Sciatic nerve (tissue), 2 donors: ENCODE measurements at regions of chr7 and their contacts with region 1.

Region 1: DNA sequence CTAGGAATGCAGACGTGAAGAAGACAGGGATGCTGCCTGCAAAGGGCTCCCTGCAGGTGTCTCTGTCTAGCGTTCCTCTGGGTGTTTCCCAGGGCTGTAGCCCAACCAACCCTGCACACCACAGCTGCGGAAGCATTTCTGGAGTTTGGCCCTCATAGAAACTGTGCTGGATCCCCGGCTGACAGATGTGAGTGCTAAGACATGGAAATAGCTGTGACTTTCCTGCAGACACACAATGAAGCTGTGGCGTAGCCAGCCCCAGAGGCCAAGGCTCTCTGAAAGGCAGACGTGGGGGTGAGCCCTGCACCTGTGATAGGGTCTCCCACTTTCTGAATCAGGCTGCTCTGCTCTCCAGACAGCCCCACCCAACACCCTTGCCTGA is 44.8 kb downstream of the ADCYAP1R1 start:
- DNase-seq: peak; percentile 27
- ATAC-seq: no peak

Region 2: GRCh38 chr7:31398815-31399214 is 301.9 kb after region 1 on chr7:
- intact Hi-C with region 1: no loop called
- DNase-seq: no peak
- ATAC-seq: no peak

Region 3: DNA sequence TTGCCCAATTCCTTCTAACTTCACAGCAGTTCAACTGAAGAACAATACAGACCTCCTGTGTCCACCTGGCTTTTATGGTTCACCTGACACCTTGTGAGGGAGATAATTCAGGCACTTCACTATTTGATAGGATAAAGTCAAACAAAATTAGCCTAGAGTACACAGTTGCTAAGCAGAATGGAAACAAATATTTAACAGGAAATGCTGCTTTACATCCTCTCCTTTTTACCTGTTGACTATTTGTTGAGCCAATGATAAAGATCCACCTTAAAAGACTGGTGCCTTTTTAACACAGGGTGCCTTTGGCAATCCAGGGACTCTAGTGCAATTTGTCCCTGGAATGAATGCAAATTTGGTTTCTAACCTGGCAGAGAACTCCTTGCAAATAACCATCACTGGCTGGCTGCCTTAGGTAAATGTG is 456.8 kb after region 1 on chr7:
- intact Hi-C with region 1: loop called (anchors 5 kb)
- DNase-seq: no peak
- ATAC-seq: no peak

Region 4: DNA sequence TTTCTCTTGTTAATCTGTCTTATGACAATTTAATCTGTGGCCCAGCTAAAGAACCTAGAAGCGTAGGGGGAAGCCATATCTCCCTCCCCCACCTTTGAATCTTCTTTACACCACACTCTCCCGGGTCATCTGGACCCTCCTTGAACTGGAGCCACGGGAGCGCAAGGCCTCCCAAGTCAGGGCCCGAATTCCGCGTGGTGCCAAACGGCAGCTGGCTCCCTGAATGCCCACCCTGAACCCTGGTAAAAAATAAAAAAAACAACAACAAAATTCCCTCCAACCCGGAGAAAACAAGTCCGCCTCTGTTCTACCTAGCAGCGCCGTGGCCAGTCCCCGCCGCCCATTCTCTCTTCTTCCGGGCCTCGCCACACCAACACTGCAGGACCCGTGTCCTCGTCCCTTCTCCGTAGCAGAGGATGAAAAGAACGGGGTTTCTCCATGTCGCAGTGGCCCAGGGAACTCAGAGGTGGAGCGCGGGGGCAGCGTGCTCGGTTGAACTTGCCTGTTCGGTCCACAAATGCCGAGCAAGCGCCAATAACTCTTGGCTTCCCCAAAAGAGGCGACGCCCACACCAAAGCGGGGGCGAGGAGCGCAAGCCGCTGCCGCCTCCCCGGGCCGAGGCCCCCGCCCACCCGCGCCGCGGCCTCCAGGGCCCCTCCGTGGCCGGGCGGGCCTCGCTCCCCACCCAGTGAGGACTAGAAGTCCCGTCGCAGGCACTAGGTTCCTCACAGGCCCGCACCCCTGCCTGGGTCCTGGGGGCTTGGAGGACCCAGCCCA is 1845.3 kb after region 1 on chr7:
- intact Hi-C with region 1: no loop called
- DNase-seq: peak; percentile 85
- ATAC-seq: peak; percentile 83